B cell (primary cell): ENCODE measurements at regions of chr2 and their contacts with region 1.

Region 1: GRCh38 chr2:218216674-218217359 is at the start of gene ARPC2:
- DNase-seq: peak; percentile 98
- ATAC-seq: peak; percentile 74
- H3K4me3 ChIP-seq: peak within 1 kb of the TSS; percentile 93 to 99 (median 97)
- H3K4me3 Mint-ChIP-seq: peak within 1 kb of the TSS; percentile 90
- H3K27ac ChIP-seq: peak within 1 kb of the TSS; percentile 95 to 99
- H3K27ac Mint-ChIP-seq: peak within 1 kb of the TSS; percentile 94
- H3K4me1 ChIP-seq: peaks cover 36 to 45% of the 10 kb centered on the region in 2 donors
- H3K4me1 Mint-ChIP-seq: peaks cover 43% of the 10 kb centered on the region
- H3K27me3 ChIP-seq: no peaks in the 10 kb centered on the region
- H3K27me3 Mint-ChIP-seq: no peaks in the 10 kb centered on the region
- CTCF ChIP-seq: no peak
- total RNA-seq, gene ARPC2: 343 and 352 TPM in 2 replicates

Region 2: GRCh38 chr2:218229239-218229638 is 12.4 kb after region 1 on chr2:
- CTCF ChIA-PET with region 1: interaction called, 16 read pairs
- POLR2A ChIA-PET with region 1: interaction called, 7 read pairs
- intact Hi-C with region 1: loop called (anchors 1 kb)
- DNase-seq: peak; percentile 54
- ATAC-seq: peak; percentile 86
- H3K4me3 ChIP-seq: no peak overlapping the region
- H3K4me3 Mint-ChIP-seq: peak overlapping the region; percentile 65
- H3K27ac ChIP-seq: peak overlapping the region; percentile 36 to 60
- H3K27ac Mint-ChIP-seq: peak overlapping the region; percentile 84
- H3K4me1 ChIP-seq: peaks cover 44 to 53% of the 10 kb centered on the region in 2 donors
- H3K4me1 Mint-ChIP-seq: peaks cover 55% of the 10 kb centered on the region
- H3K27me3 ChIP-seq: no peaks in the 10 kb centered on the region
- H3K27me3 Mint-ChIP-seq: no peaks in the 10 kb centered on the region
- CTCF ChIP-seq: no peak

Region 3: GRCh38 chr2:218322895-218323808 is 106.3 kb after region 1 on chr2:
- CTCF ChIA-PET with region 1: no interaction called
- POLR2A ChIA-PET with region 1: no interaction called
- intact Hi-C with region 1: loop called (anchors 1 kb)
- DNase-seq: peak; percentile 74
- ATAC-seq: peak; percentile 79
- H3K4me3 ChIP-seq: peak overlapping the region in 4 of 5 experiments; percentile 31 to 63 (median 58)
- H3K4me3 Mint-ChIP-seq: peak overlapping the region; percentile 85
- H3K27ac ChIP-seq: peak overlapping the region in 1 of 2 donors; percentile 38
- H3K27ac Mint-ChIP-seq: peak overlapping the region; percentile 41
- H3K4me1 ChIP-seq: peaks cover 34 to 40% of the 10 kb centered on the region in 2 donors
- H3K4me1 Mint-ChIP-seq: peaks cover 41% of the 10 kb centered on the region
- H3K27me3 ChIP-seq: peaks cover 0 to 11% (median 5%) of the 10 kb centered on the region in 4 experiments
- H3K27me3 Mint-ChIP-seq: no peaks in the 10 kb centered on the region
- CTCF ChIP-seq: no peak

Region 4: DNA sequence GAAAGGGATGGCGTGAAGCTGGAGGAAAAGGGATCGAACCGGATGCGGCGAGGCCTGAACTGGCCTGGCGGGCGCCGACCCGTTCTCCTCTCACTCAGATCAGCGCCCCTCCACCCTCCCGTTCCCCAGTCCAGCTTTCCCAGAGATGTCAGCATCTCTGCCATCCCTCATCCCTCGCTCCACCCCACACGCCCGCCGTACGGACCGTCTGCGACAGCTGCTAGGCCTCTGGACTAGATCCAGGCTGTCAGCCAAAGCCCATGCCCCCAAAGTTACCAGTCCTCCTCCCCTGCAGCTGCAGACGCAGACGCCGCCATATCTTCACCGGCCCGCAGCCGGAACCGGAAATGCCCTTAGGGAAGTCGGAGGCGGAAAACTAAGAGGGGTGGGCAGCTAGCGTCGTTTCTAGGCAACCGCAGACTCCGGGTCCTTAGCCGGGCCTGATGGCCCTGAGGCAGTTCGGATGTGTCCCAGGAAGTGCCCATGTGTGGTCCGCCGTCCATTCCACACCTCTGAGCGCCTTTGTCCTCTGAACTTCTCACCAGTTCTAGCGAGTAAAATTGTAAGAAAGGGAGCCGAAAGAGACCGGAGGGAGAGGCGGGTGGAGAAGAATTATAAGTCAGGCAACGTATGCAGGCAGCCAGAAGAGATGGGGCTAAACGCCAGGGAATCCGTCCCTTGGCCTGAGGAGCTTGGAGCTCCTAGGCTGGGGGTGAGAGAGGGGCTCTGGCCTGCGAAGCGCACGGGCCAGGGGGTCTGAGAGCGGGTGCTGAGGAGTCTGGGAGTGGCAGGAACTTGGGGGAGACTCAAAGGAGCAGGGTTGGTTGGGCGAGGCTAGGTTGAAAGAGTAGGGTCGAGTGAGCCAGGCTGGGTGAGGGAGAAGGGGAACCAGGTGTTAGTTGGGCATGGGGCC is 455.1 kb after region 1 on chr2 and contains the starts of genes RNF25 and STK36:
- CTCF ChIA-PET with region 1: no interaction called
- POLR2A ChIA-PET with region 1: no interaction called
- intact Hi-C with region 1: loop called (anchors 5 kb)
- DNase-seq: peak; percentile 85
- ATAC-seq: peak; percentile 95
- H3K4me3 ChIP-seq: peak within 1 kb of the TSS; percentile 66 to 96 (median 84)
- H3K4me3 Mint-ChIP-seq: peak within 1 kb of the TSS; percentile 97
- H3K27ac ChIP-seq: peak within 1 kb of the TSS; percentile 8 to 84
- H3K27ac Mint-ChIP-seq: peak within 1 kb of the TSS; percentile 91
- H3K4me1 ChIP-seq: peaks cover 14 to 15% of the 10 kb centered on the region in 2 donors
- H3K4me1 Mint-ChIP-seq: peaks cover 20% of the 10 kb centered on the region
- H3K27me3 ChIP-seq: no peaks in the 10 kb centered on the region
- H3K27me3 Mint-ChIP-seq: no peaks in the 10 kb centered on the region
- CTCF ChIP-seq: no peak
- total RNA-seq, gene RNF25: 31.7 and 31.8 TPM in 2 replicates
- total RNA-seq, gene STK36: 41.3 and 42.9 TPM in 2 replicates

Region 5: GRCh38 chr2:219253753-219254590 is 1037.2 kb after region 1 on chr2 and contains the start of gene TUBA4A:
- CTCF ChIA-PET with region 1: no interaction called
- POLR2A ChIA-PET with region 1: interaction called, 4 read pairs
- intact Hi-C with region 1: loop called (anchors 5 kb)
- DNase-seq: peak; percentile 93
- ATAC-seq: peak; percentile 72
- H3K4me3 ChIP-seq: peak within 1 kb of the TSS; percentile 83 to 97 (median 90)
- H3K4me3 Mint-ChIP-seq: peak within 1 kb of the TSS; percentile 87
- H3K27ac ChIP-seq: peak within 1 kb of the TSS; percentile 93 to 94
- H3K27ac Mint-ChIP-seq: peak within 1 kb of the TSS; percentile 96
- H3K4me1 ChIP-seq: peaks cover 34 to 44% of the 10 kb centered on the region in 2 donors
- H3K4me1 Mint-ChIP-seq: peaks cover 49% of the 10 kb centered on the region
- H3K27me3 ChIP-seq: no peaks in the 10 kb centered on the region
- H3K27me3 Mint-ChIP-seq: no peaks in the 10 kb centered on the region
- CTCF ChIP-seq: no peak
- total RNA-seq, gene TUBA4A: 196 and 213 TPM in 2 replicates